CD8-positive, alpha-beta memory T cell (primary cell): ENCODE measurements at regions of chr7 and their contacts with region 1.

Region 1: GRCh38 chr7:21427182-21427870 is 557 bp upstream of the SP4 start:
- DNase-seq: peak; percentile 99 to 100 (median 99)
- H3K4me3 ChIP-seq: peak overlapping the region; percentile 99
- H3K4me3 Mint-ChIP-seq: peak overlapping the region; percentile 91 to 100 (median 98)
- H3K27ac ChIP-seq: peak overlapping the region; percentile 97
- H3K27ac Mint-ChIP-seq: peak overlapping the region; percentile 97 to 100 (median 98)
- H3K4me1 ChIP-seq: peaks cover 40% of the 10 kb centered on the region
- H3K4me1 Mint-ChIP-seq: peaks cover 39 to 51% (median 51%) of the 10 kb centered on the region in 3 donors
- H3K27me3 ChIP-seq: no peaks in the 10 kb centered on the region
- H3K27me3 Mint-ChIP-seq: no peaks in the 10 kb centered on the region

Region 2: GRCh38 chr7:21261627-21262594 is 165.4 kb before region 1 on chr7:
- CTCF ChIA-PET with region 1: interaction called, 12 read pairs
- POLR2A ChIA-PET with region 1: no interaction called
- DNase-seq: peak; percentile 24 to 74 (median 43)
- H3K4me3 ChIP-seq: no peak overlapping the region
- H3K4me3 Mint-ChIP-seq: no peak overlapping the region
- H3K27ac ChIP-seq: no peak overlapping the region
- H3K27ac Mint-ChIP-seq: peak overlapping the region in 4 of 8 donors; percentile 22 to 91 (median 54)
- H3K4me1 ChIP-seq: peaks cover 9% of the 10 kb centered on the region
- H3K4me1 Mint-ChIP-seq: peaks cover 11 to 13% (median 12%) of the 10 kb centered on the region in 3 donors
- H3K27me3 ChIP-seq: no peaks in the 10 kb centered on the region
- H3K27me3 Mint-ChIP-seq: no peaks in the 10 kb centered on the region

Region 3: DNA sequence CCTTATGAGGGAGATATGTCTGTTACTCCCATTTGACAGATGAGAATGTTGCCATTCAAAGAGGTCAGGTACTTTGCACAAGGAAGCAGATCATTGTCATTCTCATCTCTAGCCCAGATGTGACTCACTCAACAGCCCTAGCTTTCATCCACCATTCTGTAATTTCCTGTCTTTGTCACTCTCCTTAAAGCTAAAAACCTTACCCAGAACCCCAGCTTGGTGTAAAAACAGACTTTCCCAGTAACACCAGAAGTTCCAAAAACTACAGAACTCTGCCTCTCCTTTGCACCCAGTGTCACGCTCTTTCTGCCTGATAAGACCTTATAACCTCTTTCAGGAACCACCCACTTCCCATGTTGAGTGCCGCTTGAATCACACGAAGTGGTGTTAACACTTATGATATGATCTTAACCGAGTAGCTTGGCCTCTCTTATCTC is 88.6 kb before region 1 on chr7:
- CTCF ChIA-PET with region 1: interaction called, 4 read pairs
- POLR2A ChIA-PET with region 1: interaction called, 11 read pairs
- DNase-seq: peak in 2 of 5 donors; percentile 55 to 66
- H3K4me3 ChIP-seq: no peak overlapping the region
- H3K4me3 Mint-ChIP-seq: peak overlapping the region; percentile 0 to 80 (median 66)
- H3K27ac ChIP-seq: peak overlapping the region; percentile 25
- H3K27ac Mint-ChIP-seq: peak overlapping the region; percentile 29 to 92 (median 87)
- H3K4me1 ChIP-seq: peaks cover 8% of the 10 kb centered on the region
- H3K4me1 Mint-ChIP-seq: peaks cover 46 to 55% (median 53%) of the 10 kb centered on the region in 3 donors
- H3K27me3 ChIP-seq: no peaks in the 10 kb centered on the region
- H3K27me3 Mint-ChIP-seq: no peaks in the 10 kb centered on the region

Region 4: DNA sequence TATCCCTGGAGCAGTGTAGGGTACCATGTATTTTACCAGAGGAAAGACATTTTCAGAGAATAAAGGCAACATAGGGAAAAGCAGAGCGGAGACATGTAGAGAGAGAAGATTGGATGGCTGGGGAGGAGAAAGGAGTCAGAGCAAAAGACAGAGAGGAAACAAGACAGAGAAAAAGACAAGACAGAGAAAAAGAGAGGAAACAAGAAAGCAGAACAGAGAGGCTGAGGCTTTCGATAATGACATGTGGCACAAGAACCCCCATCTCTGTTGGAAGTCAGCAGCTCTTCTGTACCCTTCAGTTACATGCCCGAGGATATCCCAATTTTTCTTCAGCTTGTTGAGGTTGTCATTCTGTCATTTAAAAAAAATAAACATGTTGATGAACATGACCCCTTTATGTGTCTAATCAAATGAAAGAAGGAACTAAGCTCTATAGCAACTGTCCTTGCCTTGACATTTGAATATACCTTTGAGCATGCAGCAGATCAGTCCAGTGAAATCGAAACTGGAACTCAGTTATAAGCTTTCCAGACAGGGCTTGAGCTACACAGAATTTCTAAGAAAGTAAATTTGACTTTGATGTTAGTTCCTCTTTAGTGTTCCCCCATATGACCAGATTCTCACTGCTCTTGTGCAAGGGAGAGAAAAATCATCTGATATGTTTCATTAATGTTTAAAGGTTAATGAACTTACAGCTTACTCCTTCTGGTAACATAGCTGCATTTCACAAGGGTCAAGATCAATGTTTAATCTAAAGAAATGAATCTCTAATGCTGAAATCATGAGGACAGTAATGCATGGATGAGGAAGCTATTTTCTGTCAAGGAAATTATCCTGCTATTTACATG is 74.6 kb before region 1 on chr7:
- CTCF ChIA-PET with region 1: interaction called, 6 read pairs
- POLR2A ChIA-PET with region 1: interaction called, 17 read pairs
- DNase-seq: peak in 2 of 5 donors; percentile 41 to 45
- H3K4me3 ChIP-seq: peak overlapping the region; percentile 10
- H3K4me3 Mint-ChIP-seq: peak overlapping the region; percentile 11 to 84 (median 61)
- H3K27ac ChIP-seq: no peak overlapping the region
- H3K27ac Mint-ChIP-seq: peak overlapping the region; percentile 77 to 98 (median 90)
- H3K4me1 ChIP-seq: peaks cover 59% of the 10 kb centered on the region
- H3K4me1 Mint-ChIP-seq: peaks cover 54 to 60% (median 59%) of the 10 kb centered on the region in 3 donors
- H3K27me3 ChIP-seq: no peaks in the 10 kb centered on the region
- H3K27me3 Mint-ChIP-seq: no peaks in the 10 kb centered on the region

Region 5: GRCh38 chr7:21412410-21412851 is 14.9 kb before region 1 on chr7:
- CTCF ChIA-PET with region 1: interaction called, 13 read pairs
- POLR2A ChIA-PET with region 1: interaction called, 21 read pairs
- DNase-seq: peak in 2 of 5 donors; percentile 45 to 46
- H3K4me3 ChIP-seq: no peak overlapping the region
- H3K4me3 Mint-ChIP-seq: peak overlapping the region; percentile 17 to 74 (median 69)
- H3K27ac ChIP-seq: no peak overlapping the region
- H3K27ac Mint-ChIP-seq: peak overlapping the region; percentile 76 to 95 (median 89)
- H3K4me1 ChIP-seq: peaks cover 25% of the 10 kb centered on the region
- H3K4me1 Mint-ChIP-seq: peaks cover 58 to 74% (median 69%) of the 10 kb centered on the region in 3 donors
- H3K27me3 ChIP-seq: no peaks in the 10 kb centered on the region
- H3K27me3 Mint-ChIP-seq: no peaks in the 10 kb centered on the region

Region 6: DNA sequence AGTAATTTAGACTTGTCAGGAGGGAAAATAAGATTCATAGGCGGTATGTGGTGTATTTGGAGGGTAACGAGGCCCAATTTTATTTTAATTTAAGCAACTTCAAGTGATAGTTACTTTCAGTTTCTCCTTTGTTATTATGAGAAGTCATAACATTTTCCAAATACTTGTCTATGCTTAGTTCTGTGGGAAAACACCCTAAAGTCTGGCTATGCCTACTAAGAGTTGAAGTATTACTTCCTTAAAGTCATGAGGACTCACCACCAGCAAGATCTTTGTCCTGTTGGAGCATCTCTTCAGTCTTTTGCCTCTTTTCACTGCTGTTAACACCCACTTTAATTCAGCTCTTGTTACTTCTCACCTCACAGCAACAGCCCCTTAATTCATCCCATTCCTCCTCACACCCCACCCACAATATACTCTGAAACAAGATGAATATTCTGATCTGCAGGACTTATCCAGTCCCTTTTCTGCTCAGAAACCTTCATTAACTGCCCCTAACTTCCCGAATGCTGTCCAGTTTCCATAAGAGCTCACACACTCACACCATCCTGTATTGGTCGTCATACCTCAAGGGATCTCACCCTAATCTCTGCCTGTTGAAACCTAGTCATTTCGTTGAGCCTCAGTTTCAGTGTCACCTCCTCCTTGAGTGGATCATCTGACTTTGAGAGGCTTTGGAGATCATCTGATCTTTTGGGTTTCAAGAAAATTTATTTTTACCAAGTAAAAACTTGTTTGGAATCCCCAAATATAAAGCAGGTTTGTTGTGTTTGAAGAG is 176.8 kb after region 1 on chr7:
- CTCF ChIA-PET with region 1: no interaction called
- POLR2A ChIA-PET with region 1: no interaction called
- DNase-seq: no peak
- H3K4me3 ChIP-seq: no peak overlapping the region
- H3K4me3 Mint-ChIP-seq: no peak overlapping the region
- H3K27ac ChIP-seq: no peak overlapping the region
- H3K27ac Mint-ChIP-seq: no peak overlapping the region
- H3K4me1 ChIP-seq: no peaks in the 10 kb centered on the region
- H3K4me1 Mint-ChIP-seq: peaks cover 5 to 10% (median 8%) of the 10 kb centered on the region in 3 donors
- H3K27me3 ChIP-seq: no peaks in the 10 kb centered on the region
- H3K27me3 Mint-ChIP-seq: peaks cover 3 to 40% of the 10 kb centered on the region in 2 donors